Colonic mucosa (tissue), 4 donors: ENCODE measurements at regions of chr1 and their contacts with region 1.

Region 1: DNA sequence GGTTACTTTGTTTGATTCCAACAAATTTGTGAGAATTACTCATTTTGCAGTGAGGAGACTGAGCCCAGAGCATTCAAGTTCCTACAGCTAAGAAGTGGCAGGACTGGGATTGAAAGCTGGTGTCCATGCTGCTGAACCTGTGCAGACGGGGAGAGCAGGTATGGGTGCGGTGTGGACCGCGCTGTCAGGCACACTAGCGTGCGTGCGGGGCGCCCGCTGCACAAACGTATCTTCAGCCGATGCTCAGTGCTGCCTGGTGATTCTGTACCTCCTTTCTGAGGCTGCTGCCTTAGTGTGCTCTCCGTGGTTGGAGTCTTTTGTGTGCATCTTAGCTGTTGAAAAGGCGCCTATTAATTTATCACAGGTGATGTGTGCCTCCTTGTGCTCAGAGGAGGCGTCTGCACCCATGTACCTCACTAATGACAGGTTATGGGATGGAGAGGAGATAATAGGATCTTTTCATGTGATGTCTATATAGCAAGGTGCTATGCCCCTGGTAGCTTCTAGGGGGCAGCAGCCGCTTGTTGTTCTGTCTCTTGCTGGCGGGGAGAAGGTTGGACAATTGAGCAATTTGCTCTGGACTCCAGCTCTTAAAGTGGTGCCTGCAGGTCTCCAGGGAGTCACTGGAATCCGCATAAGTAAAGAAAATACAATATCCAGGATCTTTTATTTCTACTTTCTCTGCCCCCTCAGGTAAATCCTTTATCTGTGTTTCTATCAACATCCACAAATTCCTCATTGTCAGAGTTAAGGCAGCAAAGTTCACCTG is 32.5 kb downstream of the PEX14 start:
- DNase-seq: peak; percentile 57
- H3K4me3 ChIP-seq: no peak overlapping the region
- H3K27ac ChIP-seq: no peak overlapping the region
- H3K4me1 ChIP-seq: peaks cover 13% of the 10 kb centered on the region
- H3K27me3 ChIP-seq: no peaks in the 10 kb centered on the region
- CTCF ChIP-seq: peak; percentile 88

Region 2: DNA sequence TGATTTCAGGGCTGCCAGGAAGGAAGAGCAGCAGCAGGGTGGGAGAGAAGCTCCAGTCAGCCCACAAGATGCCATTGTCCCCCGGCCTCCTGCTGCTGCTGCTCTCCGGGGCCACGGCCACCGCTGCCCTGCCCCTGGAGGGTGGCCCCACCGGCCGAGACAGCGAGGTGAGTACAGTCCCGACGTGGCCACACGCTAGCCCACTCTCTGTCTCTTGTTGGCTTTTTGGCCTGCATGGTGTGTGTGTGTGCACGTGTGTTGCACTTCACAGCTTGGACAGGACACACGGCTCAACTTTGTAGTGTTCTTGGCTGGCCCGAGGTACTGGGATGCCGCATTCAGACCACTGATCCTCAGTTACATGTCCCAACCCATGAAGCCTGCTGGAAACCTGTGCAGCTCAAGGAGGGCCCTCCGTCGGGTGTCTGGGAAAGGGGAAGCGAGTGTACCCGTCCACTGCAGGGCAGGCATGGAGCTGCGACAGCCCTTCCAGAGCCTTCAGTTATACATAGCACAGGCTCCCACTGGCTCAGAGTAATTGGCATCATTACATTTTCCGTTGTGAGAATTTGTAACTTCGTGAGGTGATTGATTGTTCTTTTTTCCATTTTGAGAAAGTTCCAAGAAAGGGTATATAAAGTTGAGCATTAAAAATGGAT is 57.0 kb before region 1 on chr1:
- intact Hi-C with region 1: no loop called
- DNase-seq: no peak
- H3K4me3 ChIP-seq: no peak overlapping the region
- H3K27ac ChIP-seq: no peak overlapping the region
- H3K4me1 ChIP-seq: no peaks in the 10 kb centered on the region
- H3K27me3 ChIP-seq: no peaks in the 10 kb centered on the region
- CTCF ChIP-seq: no peak

Region 3: DNA sequence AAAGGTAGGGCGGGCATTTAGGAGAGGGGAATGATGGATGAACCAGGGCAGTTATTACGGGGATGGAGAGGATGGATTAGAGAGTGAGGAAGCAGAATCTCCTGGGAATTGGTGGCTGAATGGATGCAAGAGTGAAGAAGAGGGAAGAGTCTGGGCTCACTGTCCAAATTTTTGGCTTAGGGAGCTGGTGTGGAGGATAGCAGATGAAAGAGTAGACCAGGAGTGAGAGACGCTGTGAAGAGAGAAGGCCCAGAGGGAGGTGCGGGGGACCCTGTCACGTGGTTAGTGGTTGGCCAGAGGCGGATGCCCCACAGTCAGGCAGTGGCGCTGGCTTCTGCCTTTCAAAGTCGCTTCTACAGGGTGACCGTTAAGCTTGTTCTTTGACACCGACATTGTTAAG is 45.8 kb after region 1 on chr1:
- intact Hi-C with region 1: no loop called
- DNase-seq: no peak
- H3K4me3 ChIP-seq: no peak overlapping the region
- H3K27ac ChIP-seq: no peak overlapping the region
- H3K4me1 ChIP-seq: no peaks in the 10 kb centered on the region
- H3K27me3 ChIP-seq: no peaks in the 10 kb centered on the region
- CTCF ChIP-seq: no peak

Region 4: DNA sequence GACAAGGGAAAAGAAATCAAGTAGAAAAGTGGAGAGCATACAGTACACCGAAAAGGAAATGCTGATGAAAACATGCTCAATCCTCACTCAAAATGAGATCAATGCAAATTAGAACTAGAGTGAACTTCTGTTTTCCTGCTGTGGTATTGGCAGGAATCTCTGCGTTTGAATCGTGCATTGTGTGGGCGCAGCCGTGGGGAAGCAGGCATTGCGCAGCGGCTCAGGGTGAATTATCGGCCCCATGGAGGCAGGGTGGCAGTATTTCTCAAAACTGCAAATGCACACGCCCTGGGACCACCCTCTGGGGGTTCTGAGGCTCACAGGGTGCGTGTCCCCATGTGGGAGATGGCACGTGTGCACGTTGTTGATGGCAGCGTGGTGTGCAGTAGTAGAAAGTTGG is 108.0 kb after region 1 on chr1:
- intact Hi-C with region 1: no loop called
- DNase-seq: no peak
- H3K4me3 ChIP-seq: no peak overlapping the region
- H3K27ac ChIP-seq: no peak overlapping the region
- H3K4me1 ChIP-seq: no peaks in the 10 kb centered on the region
- H3K27me3 ChIP-seq: no peaks in the 10 kb centered on the region
- CTCF ChIP-seq: no peak

Region 5: DNA sequence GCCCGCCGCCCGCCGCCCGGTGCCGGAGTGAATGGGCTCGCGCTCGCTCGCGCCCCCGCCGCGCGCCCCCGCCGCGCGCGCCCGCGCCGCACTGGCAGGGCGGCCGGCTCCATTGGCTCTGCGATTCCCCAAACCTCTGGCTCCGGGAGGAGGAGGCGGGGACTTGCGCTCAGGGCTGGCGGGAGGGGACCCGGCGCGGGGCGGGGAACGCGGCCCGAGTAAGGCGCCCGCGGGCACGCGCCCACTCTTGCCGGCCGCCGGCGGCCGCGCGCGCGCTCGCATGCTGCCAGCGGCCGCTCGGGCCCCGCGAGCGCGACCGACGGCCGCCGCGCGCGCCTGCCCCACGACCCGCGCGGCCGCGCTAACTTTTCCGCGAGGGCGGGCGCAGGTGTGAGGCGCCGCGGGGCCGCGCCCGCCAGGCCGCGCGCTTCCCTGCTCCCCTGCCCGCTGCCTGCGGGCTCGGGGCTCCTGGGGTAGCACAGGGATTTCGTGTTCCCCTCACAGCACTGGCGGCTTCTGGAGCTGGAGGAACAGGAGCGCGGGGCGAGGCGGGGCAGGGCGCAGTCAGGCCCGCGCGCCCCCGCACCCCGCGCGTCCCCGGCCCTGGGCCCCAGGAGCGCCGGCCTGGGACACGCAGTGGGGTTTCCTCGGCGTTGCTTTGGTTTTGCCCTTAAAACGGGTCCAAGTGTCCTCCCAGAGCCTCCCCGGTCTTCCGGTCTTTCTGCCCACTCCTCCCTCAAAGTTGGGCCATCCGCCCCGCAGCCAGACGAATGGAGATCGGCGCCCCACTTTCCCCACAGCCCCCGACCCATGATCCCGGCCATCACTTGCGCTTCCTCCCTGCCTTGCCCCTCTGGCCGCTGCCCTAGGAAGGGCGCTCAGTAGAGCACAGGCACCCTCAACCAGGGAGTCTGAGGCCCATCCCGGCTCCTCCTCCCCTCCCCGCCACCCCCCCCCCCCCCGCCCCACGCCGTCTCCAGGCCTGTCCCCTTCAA is 187.6 kb after region 1 on chr1:
- intact Hi-C with region 1: loop called (anchors 10 kb)
- DNase-seq: peak; percentile 87
- H3K4me3 ChIP-seq: peak overlapping the region; percentile 44
- H3K27ac ChIP-seq: peak overlapping the region; percentile 71
- H3K4me1 ChIP-seq: peaks cover 15% of the 10 kb centered on the region
- H3K27me3 ChIP-seq: no peaks in the 10 kb centered on the region
- CTCF ChIP-seq: no peak